Activated CD8-positive, alpha-beta T cell treated with anti-CD3 and anti-CD28 coated beads for 36 hours (primary cell): ENCODE measurements at regions of chr22 and their contacts with region 1.

Region 1: GRCh38 chr22:37566903-37567820 is 6.9 kb downstream of the CDC42EP1 start:
- DNase-seq: peak; percentile 97
- ATAC-seq: peak; percentile 89
- H3K4me3 Mint-ChIP-seq: peak overlapping the region; percentile 49
- H3K27ac Mint-ChIP-seq: peak overlapping the region; percentile 85
- H3K4me1 Mint-ChIP-seq: peaks cover 26% of the 10 kb centered on the region
- H3K27me3 Mint-ChIP-seq: peaks cover 18% of the 10 kb centered on the region
- CTCF ChIP-seq: peak; percentile 92

Region 2: GRCh38 chr22:37472418-37473006 is 94.7 kb before region 1 on chr22:
- CTCF ChIA-PET with region 1: interaction called, 19 read pairs
- POLR2A ChIA-PET with region 1: no interaction called
- intact Hi-C with region 1: no loop called
- DNase-seq: peak; percentile 48
- ATAC-seq: no peak
- H3K4me3 Mint-ChIP-seq: no peak overlapping the region
- H3K27ac Mint-ChIP-seq: peak overlapping the region; percentile 42
- H3K4me1 Mint-ChIP-seq: peaks cover 5% of the 10 kb centered on the region
- H3K27me3 Mint-ChIP-seq: no peaks in the 10 kb centered on the region
- CTCF ChIP-seq: peak; percentile 70

Region 3: GRCh38 chr22:37529652-37530345 is 37.4 kb before region 1 on chr22:
- CTCF ChIA-PET with region 1: interaction called, 28 read pairs
- POLR2A ChIA-PET with region 1: no interaction called
- intact Hi-C with region 1: no loop called
- DNase-seq: peak; percentile 27
- ATAC-seq: peak; percentile 49
- H3K4me3 Mint-ChIP-seq: no peak overlapping the region
- H3K27ac Mint-ChIP-seq: no peak overlapping the region
- H3K4me1 Mint-ChIP-seq: peaks cover 25% of the 10 kb centered on the region
- H3K27me3 Mint-ChIP-seq: peaks cover 10% of the 10 kb centered on the region
- CTCF ChIP-seq: no peak

Region 4: DNA sequence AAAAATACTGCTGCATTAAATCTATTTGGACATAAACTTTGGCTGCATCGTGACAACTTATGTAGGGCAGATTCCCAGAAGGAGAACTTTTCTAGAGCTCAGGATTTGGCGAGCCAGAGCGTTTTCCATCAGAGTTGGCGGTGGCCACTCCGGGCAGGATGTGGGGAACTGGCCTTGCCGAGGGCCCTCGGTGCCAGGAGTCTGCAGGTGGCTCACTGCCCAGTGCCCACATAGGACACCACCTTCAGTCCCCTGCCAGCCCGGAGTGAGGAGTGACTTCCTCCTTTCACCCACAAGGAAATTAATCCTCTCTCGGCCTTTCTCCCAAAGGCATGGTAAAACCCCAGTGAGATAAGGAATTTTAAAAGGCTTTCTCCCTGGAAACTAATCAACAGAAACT is 14.3 kb after region 1 on chr22:
- CTCF ChIA-PET with region 1: interaction called, 166 read pairs
- POLR2A ChIA-PET with region 1: no interaction called
- intact Hi-C with region 1: no loop called
- DNase-seq: no peak
- ATAC-seq: no peak
- H3K4me3 Mint-ChIP-seq: no peak overlapping the region
- H3K27ac Mint-ChIP-seq: no peak overlapping the region
- H3K4me1 Mint-ChIP-seq: peaks cover 7% of the 10 kb centered on the region
- H3K27me3 Mint-ChIP-seq: peaks cover 4% of the 10 kb centered on the region
- CTCF ChIP-seq: no peak

Region 5: GRCh38 chr22:37601540-37602442 is 34.6 kb after region 1 on chr22:
- CTCF ChIA-PET with region 1: interaction called, 41 read pairs
- POLR2A ChIA-PET with region 1: interaction called, 4 read pairs
- intact Hi-C with region 1: no loop called
- DNase-seq: no peak
- ATAC-seq: peak; percentile 32
- H3K4me3 Mint-ChIP-seq: no peak overlapping the region
- H3K27ac Mint-ChIP-seq: no peak overlapping the region
- H3K4me1 Mint-ChIP-seq: peaks cover 30% of the 10 kb centered on the region
- H3K27me3 Mint-ChIP-seq: no peaks in the 10 kb centered on the region
- CTCF ChIP-seq: no peak